Mammary epithelial cell (primary cell): ENCODE measurements at regions of chr11 and their contacts with region 1.

Region 1: DNA sequence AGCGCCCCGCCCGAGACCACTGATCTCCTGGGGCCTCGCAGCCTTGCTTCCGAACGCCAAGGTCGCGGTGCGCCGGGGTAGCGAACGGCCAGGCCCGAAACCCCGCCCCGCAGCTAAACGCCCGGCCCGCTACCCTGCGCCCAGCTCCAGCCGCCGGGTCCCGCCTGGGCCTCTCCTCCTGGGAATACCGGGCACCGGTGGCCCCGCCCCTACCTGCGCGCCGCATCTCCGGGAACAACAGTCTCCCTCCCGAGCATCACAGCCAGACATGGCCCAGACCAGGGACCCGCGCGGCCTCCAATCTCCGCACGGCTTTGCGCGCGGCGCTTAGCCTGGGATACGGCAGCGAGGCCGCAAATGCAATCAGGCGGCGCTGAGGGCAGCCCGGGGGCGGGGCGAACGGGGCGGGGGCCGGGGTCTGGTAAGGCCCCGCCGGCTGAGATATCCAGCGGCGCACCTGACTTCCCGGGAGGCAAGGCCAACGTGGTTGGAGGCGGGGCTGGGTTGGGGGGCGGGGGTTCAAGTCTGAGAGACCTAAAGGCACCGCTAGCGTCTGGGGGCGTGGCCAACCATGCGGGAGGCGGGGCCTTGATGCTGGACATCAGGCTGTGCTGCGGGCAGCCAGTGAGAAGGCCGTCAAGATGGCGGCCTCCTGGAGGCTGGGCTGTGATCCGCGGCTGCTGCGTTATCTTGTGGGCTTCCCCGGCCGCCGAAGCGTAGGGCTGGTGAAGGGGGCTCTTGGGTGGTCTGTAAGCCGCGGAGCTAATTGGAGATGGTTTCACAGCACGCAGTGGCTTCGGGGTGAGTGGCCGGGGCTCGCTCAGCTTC is at the starts of genes APIP and PDHX:
- DNase-seq: peak; percentile 98
- H3K4me3 ChIP-seq: peak within 1 kb of the TSS; percentile 89 to 93 (median 92)
- H3K27ac ChIP-seq: peak within 1 kb of the TSS; percentile 91
- H3K4me1 ChIP-seq: peaks cover 22% of the 10 kb centered on the region
- H3K27me3 ChIP-seq: no peaks in the 10 kb centered on the region
- CTCF ChIP-seq: no peak
- total RNA-seq, gene APIP: 10.7 to 19.0 TPM
- total RNA-seq, gene PDHX: 25.2 to 33.4 TPM

Region 2: DNA sequence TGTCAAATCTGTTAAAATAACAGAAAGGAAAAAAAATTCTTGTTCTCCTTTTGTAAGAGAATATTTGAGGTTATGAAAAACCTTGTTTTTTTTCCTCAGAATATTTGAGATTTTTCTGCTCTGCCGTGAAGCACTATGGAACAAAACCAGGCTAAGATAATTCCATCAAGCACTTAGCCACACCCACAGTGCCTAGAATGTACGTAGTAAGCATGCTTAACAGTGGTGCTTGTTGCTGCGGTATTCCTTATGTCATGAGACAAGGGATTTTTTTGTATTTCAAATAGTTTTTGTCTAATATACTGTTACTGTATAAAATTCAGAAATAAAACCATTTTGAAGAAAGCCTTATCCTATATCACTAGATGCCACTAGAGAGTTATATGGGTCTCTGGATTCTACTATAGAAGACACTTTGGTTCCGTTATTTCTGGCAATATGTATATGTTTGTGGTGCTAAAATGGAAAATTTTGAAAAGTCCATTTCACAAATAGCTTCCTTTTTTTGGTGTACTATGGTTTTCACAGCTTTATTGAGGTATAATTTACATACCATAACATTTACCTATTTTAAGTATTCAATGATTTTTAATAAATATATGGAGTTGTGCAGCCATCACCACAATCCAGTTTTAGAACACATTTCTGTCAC is 23.9 kb after region 1 on chr11:
- CTCF ChIA-PET with region 1: no interaction called
- dilution Hi-C with region 1: no loop called
- in situ Hi-C with region 1: no loop called
- intact Hi-C with region 1: no loop called
- DNase-seq: no peak
- H3K4me3 ChIP-seq: no peak overlapping the region
- H3K27ac ChIP-seq: no peak overlapping the region
- H3K4me1 ChIP-seq: no peaks in the 10 kb centered on the region
- H3K27me3 ChIP-seq: no peaks in the 10 kb centered on the region
- CTCF ChIP-seq: peak; percentile 18 to 19

Region 3: GRCh38 chr11:35165423-35166368 is 249.5 kb after region 1 on chr11:
- CTCF ChIA-PET with region 1: no interaction called
- dilution Hi-C with region 1: no loop called
- in situ Hi-C with region 1: no loop called
- intact Hi-C with region 1: loop called (anchors 5 kb)
- DNase-seq: peak; percentile 71
- H3K4me3 ChIP-seq: peak overlapping the region in 1 of 3 experiments; percentile 5
- H3K27ac ChIP-seq: peak overlapping the region; percentile 96
- H3K4me1 ChIP-seq: peaks cover 88% of the 10 kb centered on the region
- H3K27me3 ChIP-seq: no peaks in the 10 kb centered on the region
- CTCF ChIP-seq: no peak